IMR-90 (cell line): ENCODE measurements at regions of chr14 and their contacts with region 1.

Region 1: DNA sequence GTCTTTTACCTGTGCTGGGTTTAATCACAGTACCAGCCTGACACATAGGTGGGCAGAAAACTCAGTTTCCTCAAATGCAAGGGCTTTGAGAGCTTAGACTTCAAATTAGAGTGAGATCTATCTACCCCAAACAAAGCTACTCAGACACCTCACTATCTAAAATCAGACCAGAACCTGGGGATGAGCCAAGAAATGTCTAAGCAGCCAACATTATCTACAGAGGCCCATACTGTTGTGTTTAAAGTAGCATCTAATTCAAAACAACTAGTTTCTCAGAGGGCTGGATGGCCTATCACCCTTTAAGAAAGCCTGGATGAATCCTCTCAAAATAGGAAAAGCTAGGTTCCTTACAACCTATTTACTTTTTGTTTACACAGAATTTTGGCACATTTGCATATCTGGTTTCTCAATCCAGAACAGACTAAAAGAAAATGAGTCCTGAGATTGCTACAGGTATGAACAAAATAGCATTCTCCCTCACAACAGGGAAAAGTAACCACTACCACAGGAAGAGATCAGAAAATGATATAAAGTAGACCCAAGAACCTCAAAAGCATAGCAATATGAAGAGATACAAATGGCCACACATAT is 142.4 kb downstream of the ZFP36L1 start:
- DNase-seq: no peak
- ATAC-seq: 0 out of 2 replicates have a peak, but pooled peaks have one; percentile 6
- H3K4me3 ChIP-seq: no peak overlapping the region
- H3K27ac ChIP-seq: peak overlapping the region; percentile 41; the same call in 1 of the 2 replicates
- H3K4me1 ChIP-seq: peaks cover 32% of the 10 kb centered on the region
- H3K27me3 ChIP-seq: no peaks in the 10 kb centered on the region
- CTCF ChIP-seq: no peak
- POLR2A ChIP-seq: no peak
- RAD21 ChIP-seq: no peak

Region 2: GRCh38 chr14:67446120-67447032 is 1204.1 kb before region 1 on chr14:
- CTCF ChIA-PET with region 1: no interaction called
- POLR2A ChIA-PET with region 1: no interaction called
- dilution Hi-C with region 1: no loop called
- in situ Hi-C with region 1: no loop called
- intact Hi-C with region 1: no loop called
- DNase-seq: no peak
- ATAC-seq: no peak
- H3K4me3 ChIP-seq: no peak overlapping the region
- H3K27ac ChIP-seq: no peak overlapping the region
- H3K4me1 ChIP-seq: no peaks in the 10 kb centered on the region
- H3K27me3 ChIP-seq: peaks cover 31% of the 10 kb centered on the region
- CTCF ChIP-seq: no peak
- POLR2A ChIP-seq: no peak
- RAD21 ChIP-seq: no peak

Region 3: GRCh38 chr14:68563246-68564131 is 87.0 kb before region 1 on chr14:
- CTCF ChIA-PET with region 1: no interaction called
- POLR2A ChIA-PET with region 1: no interaction called
- dilution Hi-C with region 1: no loop called
- in situ Hi-C with region 1: no loop called
- intact Hi-C with region 1: no loop called
- DNase-seq: peak; percentile 35
- ATAC-seq: peak; percentile 59
- H3K4me3 ChIP-seq: no peak overlapping the region
- H3K27ac ChIP-seq: peak overlapping the region; percentile 34; the same call in 1 of the 2 replicates
- H3K4me1 ChIP-seq: peaks cover 11% of the 10 kb centered on the region
- H3K27me3 ChIP-seq: no peaks in the 10 kb centered on the region
- CTCF ChIP-seq: no peak
- POLR2A ChIP-seq: no peak
- RAD21 ChIP-seq: no peak

Region 4: GRCh38 chr14:68633071-68633991 is 17.2 kb before region 1 on chr14:
- CTCF ChIA-PET with region 1: interaction called, 3 read pairs
- POLR2A ChIA-PET with region 1: interaction called, 11 read pairs
- dilution Hi-C with region 1: no loop called
- in situ Hi-C with region 1: no loop called
- intact Hi-C with region 1: no loop called
- DNase-seq: no peak
- ATAC-seq: peak; percentile 43
- H3K4me3 ChIP-seq: no peak overlapping the region
- H3K27ac ChIP-seq: peak overlapping the region; percentile 60; the same call in 1 of the 2 replicates
- H3K4me1 ChIP-seq: peaks cover 28% of the 10 kb centered on the region
- H3K27me3 ChIP-seq: no peaks in the 10 kb centered on the region
- CTCF ChIP-seq: no peak
- POLR2A ChIP-seq: no peak
- RAD21 ChIP-seq: no peak